ENCODE measurements at regions of chr19 and their contacts with region 1.

Region 1: GRCh38 chr19:1189419-1189818 is 15.4 kb upstream of the SBNO2 start:
- DNase-seq: no peak
- H3K4me3 ChIP-seq: no peak overlapping the region
- H3K27ac ChIP-seq: no peak overlapping the region
- H3K4me1 ChIP-seq: no peaks in the 10 kb centered on the region
- H3K27me3 ChIP-seq: no peaks in the 10 kb centered on the region
- CTCF ChIP-seq: no peak
- EP300 ChIP-seq: no peak
- POLR2A ChIP-seq: no peak

Region 2: DNA sequence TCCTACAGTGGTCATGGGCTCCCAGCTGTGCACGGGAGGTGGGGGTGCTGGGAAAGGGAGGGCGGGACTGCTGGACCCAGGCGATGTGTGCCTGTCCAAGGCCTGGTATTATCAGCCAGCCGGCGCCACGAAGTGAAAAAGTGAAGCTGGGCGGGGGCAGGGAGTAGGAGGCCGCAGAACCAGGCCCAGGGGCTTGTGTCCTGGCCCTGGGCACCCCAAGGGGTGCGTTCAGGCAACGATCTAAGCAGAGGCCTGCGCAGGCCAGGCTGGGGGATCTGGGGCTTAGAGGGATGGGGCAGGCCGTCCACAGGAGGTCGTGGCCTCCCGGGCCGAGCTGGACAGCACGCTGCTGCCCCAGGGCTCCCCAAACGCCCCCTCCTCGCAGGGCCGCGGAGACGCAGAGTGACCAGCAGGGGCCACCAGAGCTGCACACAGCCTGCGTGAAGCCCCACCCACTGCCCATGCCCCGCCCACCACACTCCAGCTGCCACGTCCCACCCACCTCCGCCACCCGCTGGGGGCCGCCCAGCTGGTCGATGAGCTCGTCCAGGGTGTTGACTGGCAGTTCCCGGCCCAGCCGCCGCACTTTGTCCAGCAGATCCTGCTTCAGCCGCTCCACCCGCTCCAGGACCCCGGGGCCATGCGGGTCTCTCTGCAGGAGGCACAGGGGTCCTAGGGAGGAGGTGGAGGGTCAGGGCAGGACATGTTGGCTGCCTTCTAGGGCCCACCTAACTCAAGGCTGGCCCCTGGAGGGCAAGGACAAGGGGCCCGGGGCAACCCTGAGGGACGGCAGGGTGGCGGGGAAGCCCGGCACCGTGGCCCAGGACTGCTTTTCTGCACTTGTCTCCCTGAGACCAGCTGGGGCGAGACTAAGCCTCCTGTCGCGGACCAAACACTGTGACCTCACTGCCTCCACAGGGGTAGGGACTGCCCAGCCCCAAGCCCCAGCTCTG is 76.1 kb before region 1 on chr19:
- intact Hi-C with region 1: loop called (anchors 5 kb)
- DNase-seq: peak; percentile 98
- H3K4me3 ChIP-seq: peak overlapping the region in 2 of 4 donors; percentile 20 to 25
- H3K27ac ChIP-seq: peak overlapping the region; percentile 80 to 85 (median 82)
- H3K4me1 ChIP-seq: peaks cover 0 to 28% (median 27%) of the 10 kb centered on the region in 4 donors
- H3K27me3 ChIP-seq: no peaks in the 10 kb centered on the region
- CTCF ChIP-seq: peak; percentile 94 to 98 (median 95)
- EP300 ChIP-seq: no peak
- POLR2A ChIP-seq: no peak

Region 3: DNA sequence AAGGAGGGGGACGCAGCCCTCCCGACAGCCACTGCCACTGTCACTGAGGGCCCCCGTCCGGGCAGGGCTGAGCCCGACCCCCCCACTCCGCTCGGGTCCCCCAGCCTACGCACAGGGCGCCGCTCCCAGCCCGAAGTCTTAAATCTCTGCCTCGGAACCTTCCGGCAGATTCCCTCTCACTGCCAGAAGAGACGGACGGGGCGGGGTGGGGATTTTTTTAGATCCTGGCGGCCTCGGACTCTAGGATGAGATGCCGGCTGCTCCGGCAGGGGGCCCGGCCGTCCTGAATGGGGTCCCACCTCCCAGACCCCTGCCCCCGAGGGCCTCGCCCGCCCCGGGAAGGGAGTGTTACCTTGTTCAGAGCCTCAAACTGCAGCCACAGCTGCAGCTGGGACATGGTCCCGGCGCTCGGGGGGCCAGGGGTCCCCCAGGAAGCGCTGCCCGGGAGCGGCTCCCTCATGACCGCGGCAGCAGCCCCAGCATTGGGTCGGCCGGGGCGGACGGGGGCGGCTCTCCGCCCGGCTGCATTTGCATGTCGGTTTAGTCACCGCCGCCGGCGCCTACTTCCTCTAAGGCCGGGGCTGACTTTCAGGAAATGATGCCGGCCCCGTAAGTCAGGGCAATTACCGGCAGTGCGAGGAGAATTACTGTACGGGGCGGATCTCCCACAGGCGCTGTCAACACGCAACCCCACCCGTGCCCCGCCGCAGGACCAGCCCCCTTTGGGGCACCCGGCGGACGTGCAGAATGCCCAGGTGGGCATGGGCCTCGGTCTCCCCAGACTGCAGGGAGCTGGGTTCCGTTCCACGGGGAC is 57.5 kb before region 1 on chr19:
- intact Hi-C with region 1: loop called (anchors 5 kb)
- DNase-seq: peak; percentile 91
- H3K4me3 ChIP-seq: peak overlapping the region; percentile 53 to 68 (median 60)
- H3K27ac ChIP-seq: peak overlapping the region; percentile 83 to 94 (median 90)
- H3K4me1 ChIP-seq: peaks cover 0 to 75% (median 59%) of the 10 kb centered on the region in 4 donors
- H3K27me3 ChIP-seq: no peaks in the 10 kb centered on the region
- CTCF ChIP-seq: peak in 1 of 4 experiments; percentile 44
- EP300 ChIP-seq: peak; percentile 16 to 91 (median 60)
- POLR2A ChIP-seq: no peak

Region 4: GRCh38 chr19:1223018-1223855 is 33.8 kb after region 1 on chr19:
- intact Hi-C with region 1: no loop called
- DNase-seq: no peak
- H3K4me3 ChIP-seq: no peak overlapping the region
- H3K27ac ChIP-seq: no peak overlapping the region
- H3K4me1 ChIP-seq: peaks cover 0 to 46% (median 32%) of the 10 kb centered on the region in 4 donors
- H3K27me3 ChIP-seq: no peaks in the 10 kb centered on the region
- CTCF ChIP-seq: peak in 2 of 4 experiments; percentile 12 to 16
- EP300 ChIP-seq: no peak
- POLR2A ChIP-seq: no peak